Heart left ventricle (tissue), 16 donors: ENCODE measurements at regions of chr17 and their contacts with region 1.

Region 1: GRCh38 chr17:7136266-7136877 is 21.8 kb upstream of the ASGR2 start:
- DNase-seq: peak; percentile 55 to 89 (median 71)
- ATAC-seq: no peak
- H3K4me3 ChIP-seq: peak overlapping the region in 1 of 12 donors; percentile 40
- H3K27ac ChIP-seq: peak overlapping the region in 1 of 12 donors; percentile 86
- H3K4me1 ChIP-seq: peaks cover 0 to 42% (median 0%) of the 10 kb centered on the region in 12 donors
- H3K27me3 ChIP-seq: peaks cover 3 to 77% (median 16%) of the 10 kb centered on the region in 9 donors
- CTCF ChIP-seq: peak; percentile 82 to 97 (median 92)
- POLR2A ChIP-seq: no peak

Region 2: DNA sequence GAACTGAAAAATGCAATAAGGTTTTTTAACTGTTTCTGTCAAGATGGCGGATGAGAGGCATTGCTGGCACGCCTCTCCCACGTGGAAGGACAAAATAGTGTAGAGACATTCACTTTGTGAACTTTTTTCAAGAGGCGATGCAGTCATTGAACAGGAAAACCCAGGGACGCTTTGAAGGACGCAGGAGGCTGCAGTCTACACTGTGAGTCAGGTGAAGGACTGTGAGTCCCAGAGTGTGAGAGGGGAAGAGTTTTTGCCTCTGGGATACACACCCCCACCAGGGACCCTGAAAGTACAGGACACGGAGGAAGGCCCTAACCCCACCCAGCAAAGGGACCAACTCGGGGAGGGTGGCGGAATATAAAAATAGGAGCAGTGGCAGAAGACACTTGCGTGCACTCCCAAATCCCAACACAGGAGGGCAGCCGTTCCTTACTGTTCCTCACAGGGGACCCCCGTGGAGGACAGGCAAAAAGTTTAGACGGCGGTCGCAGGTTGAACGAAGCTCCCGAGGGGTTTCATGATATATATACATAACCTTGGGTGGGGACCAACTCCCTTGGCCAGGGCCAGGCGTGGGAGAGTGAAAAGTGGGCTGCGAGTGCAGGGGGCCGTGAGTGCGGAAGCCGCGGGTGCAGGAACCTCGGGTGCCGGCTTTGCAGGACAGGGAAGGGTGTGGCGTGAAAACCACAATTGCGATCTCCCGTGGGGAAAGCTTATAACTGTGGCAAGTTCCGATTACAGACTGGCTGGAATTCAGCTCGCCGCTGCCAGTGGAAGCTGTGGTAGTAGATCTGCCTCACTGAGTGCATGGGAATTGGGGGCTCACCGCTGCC is 222.5 kb before region 1 on chr17:
- intact Hi-C with region 1: loop called in 9 of 10 experiments (anchors 5 to 10 kb)
- DNase-seq: peak; percentile 72 to 81 (median 76)
- ATAC-seq: peak; percentile 77 to 90 (median 82)
- H3K4me3 ChIP-seq: peak overlapping the region in 9 of 12 donors; percentile 16 to 50 (median 37)
- H3K27ac ChIP-seq: no peak overlapping the region
- H3K4me1 ChIP-seq: peaks cover 0 to 11% (median 6%) of the 10 kb centered on the region in 12 donors
- H3K27me3 ChIP-seq: peaks cover 0 to 12% (median 0%) of the 10 kb centered on the region in 9 donors
- CTCF ChIP-seq: peak; percentile 77 to 88 (median 84)
- POLR2A ChIP-seq: no peak

Region 3: GRCh38 chr17:6927290-6928126 is 208.9 kb before region 1 on chr17:
- intact Hi-C with region 1: no loop called
- DNase-seq: no peak
- ATAC-seq: no peak
- H3K4me3 ChIP-seq: no peak overlapping the region
- H3K27ac ChIP-seq: no peak overlapping the region
- H3K4me1 ChIP-seq: peaks cover 0 to 4% (median 0%) of the 10 kb centered on the region in 12 donors
- H3K27me3 ChIP-seq: no peaks in the 10 kb centered on the region
- CTCF ChIP-seq: no peak
- POLR2A ChIP-seq: no peak

Region 4: DNA sequence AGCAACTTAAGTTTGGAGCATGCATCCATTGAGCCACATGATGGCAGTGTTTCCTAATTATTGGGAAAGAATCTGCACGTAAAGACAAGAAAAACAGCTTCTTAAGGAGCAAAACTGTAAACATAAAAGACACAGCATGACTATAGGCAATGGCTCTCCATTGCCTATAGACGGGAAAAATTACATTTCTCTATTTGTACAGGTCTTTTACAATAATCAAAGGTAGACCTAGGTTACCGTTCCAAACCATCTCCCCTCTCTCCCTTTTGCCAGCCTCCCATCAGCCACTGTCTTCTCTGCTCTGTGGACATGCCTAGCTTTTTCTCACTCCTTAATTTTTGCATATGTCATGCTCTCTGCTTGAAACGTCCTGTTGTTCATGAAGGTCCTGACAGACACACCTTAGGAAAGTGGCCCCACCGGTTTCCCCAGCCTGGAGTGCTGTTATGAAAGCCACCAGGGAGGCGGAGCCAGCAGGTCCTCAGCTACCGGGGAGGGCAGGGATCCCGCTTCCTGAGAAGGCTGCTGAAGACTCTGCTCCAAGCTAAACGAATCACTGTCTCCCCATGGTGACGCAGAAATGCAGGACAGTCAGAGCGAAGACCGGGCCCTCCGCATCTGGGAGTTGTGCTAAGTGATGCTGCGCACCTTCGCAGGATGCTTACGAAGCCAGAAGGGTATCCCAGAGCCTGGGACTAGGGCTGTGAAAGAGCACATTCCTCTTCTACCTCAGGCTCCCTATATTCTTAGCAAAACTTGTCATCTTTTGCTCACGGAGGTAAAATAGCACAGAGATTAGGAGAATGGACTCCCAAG is 90.3 kb before region 1 on chr17:
- intact Hi-C with region 1: loop called in 5 of 10 experiments (anchors 1 to 2 kb)
- DNase-seq: no peak
- ATAC-seq: peak in 2 of 4 donors; percentile 31 to 48
- H3K4me3 ChIP-seq: peak overlapping the region in 9 of 12 donors; percentile 22 to 46 (median 26)
- H3K27ac ChIP-seq: peak overlapping the region in 2 of 12 donors; percentile 24 to 68
- H3K4me1 ChIP-seq: peaks cover 0 to 41% (median 28%) of the 10 kb centered on the region in 12 donors
- H3K27me3 ChIP-seq: peaks cover 0 to 43% (median 21%) of the 10 kb centered on the region in 9 donors
- CTCF ChIP-seq: peak; percentile 65 to 89 (median 80)
- POLR2A ChIP-seq: no peak

Region 5: GRCh38 chr17:7056386-7056785 is 80.0 kb before region 1 on chr17:
- intact Hi-C with region 1: loop called in 8 of 10 experiments (anchors 1 to 2 kb)
- DNase-seq: no peak
- ATAC-seq: no peak
- H3K4me3 ChIP-seq: no peak overlapping the region
- H3K27ac ChIP-seq: no peak overlapping the region
- H3K4me1 ChIP-seq: no peaks in the 10 kb centered on the region
- H3K27me3 ChIP-seq: peaks cover 0 to 7% (median 0%) of the 10 kb centered on the region in 9 donors
- CTCF ChIP-seq: no peak
- POLR2A ChIP-seq: no peak

Region 6: GRCh38 chr17:7177196-7177953 is 41.0 kb after region 1 on chr17:
- intact Hi-C with region 1: loop called in 1 of 10 experiments (anchors 2 kb)
- DNase-seq: peak in 4 of 5 donors; percentile 57 to 70 (median 66)
- ATAC-seq: peak; percentile 69 to 84 (median 74)
- H3K4me3 ChIP-seq: peak overlapping the region in 11 of 12 donors; percentile 15 to 56 (median 46)
- H3K27ac ChIP-seq: peak overlapping the region in 1 of 12 donors; percentile 24
- H3K4me1 ChIP-seq: peaks cover 0 to 30% (median 12%) of the 10 kb centered on the region in 12 donors
- H3K27me3 ChIP-seq: peaks cover 0 to 23% (median 17%) of the 10 kb centered on the region in 9 donors
- CTCF ChIP-seq: peak; percentile 76 to 92 (median 84)
- POLR2A ChIP-seq: no peak